Activated CD4-positive, alpha-beta T cell treated with anti-CD3 and anti-CD28 coated beads for 36 hours (primary cell): ENCODE measurements at regions of chr12 and their contacts with region 1.

Region 1: DNA sequence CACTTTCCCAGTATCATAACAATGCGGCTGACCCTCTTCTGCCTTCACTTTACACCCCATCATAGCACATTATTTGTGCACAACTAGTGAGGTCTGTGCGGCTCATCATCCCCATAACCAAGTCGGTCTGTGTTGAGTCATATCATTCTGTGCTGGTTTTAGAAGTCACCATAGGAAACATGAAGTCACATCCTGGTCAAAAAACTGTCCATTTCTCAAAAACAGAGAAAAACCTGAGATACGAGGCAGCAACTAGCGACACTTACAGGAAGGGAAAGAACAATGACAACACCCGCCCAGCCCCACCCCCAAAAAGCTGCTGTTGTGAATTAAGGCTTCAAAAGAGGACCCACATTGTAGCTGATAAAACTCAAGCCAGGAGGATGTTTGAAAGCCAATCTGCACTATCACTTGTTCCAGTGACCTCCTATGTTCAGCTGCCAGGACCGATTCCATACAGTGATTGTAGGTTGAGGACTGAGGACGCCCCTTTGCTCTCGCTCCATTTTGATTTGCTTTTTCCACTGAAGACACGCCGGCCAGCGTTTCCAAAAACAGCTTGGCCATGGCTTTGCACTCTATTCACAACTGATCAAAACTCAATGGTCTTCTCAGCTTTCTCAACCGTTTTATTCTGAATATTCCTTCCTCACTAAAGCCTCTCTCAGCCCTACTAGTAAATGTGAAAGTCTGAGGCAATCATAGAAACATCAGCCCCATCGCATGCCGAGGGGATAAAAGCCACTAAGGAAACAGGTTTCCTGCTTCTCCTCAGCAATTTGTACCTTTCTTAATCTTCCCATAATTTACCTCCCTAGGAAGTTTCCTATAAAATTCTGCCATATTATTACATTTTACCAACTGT is 87.5 kb downstream of the DUSP16 start:
- DNase-seq: peak; percentile 78
- ATAC-seq: peak; percentile 87
- H3K4me3 Mint-ChIP-seq: peak overlapping the region; percentile 59
- H3K27ac Mint-ChIP-seq: peak overlapping the region; percentile 97
- H3K4me1 Mint-ChIP-seq: peaks cover 81% of the 10 kb centered on the region
- H3K27me3 Mint-ChIP-seq: no peaks in the 10 kb centered on the region

Region 2: GRCh38 chr12:12442548-12443071 is 32.6 kb before region 1 on chr12:
- CTCF ChIA-PET with region 1: interaction called, 6 read pairs
- POLR2A ChIA-PET with region 1: interaction called, 15 read pairs
- intact Hi-C with region 1: loop called (anchors 1 kb)
- DNase-seq: no peak
- ATAC-seq: peak; percentile 16
- H3K4me3 Mint-ChIP-seq: peak overlapping the region; percentile 46
- H3K27ac Mint-ChIP-seq: peak overlapping the region; percentile 98
- H3K4me1 Mint-ChIP-seq: peaks cover 81% of the 10 kb centered on the region
- H3K27me3 Mint-ChIP-seq: no peaks in the 10 kb centered on the region

Region 3: DNA sequence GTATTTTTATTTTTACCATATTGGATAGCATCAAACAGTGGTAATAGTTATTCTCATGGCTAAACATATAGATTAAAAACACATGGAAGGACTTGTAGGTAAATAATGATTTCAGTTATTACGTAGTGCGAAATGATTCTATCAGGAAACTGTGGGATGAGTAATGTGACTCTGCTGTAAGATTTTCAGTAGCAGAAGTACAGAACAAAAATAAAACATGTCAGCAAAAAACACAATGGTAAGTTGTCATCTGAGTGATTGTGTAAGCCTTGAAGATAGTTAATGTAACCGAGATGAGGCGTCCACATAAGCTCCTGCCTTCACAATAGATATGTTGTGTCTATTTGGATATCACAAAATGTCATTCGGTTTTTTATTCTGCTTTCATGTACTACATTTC is 18.5 kb before region 1 on chr12:
- CTCF ChIA-PET with region 1: interaction called, 22 read pairs
- POLR2A ChIA-PET with region 1: interaction called, 27 read pairs
- intact Hi-C with region 1: loop called in 1 of 2 experiments (anchors 2 kb)
- DNase-seq: no peak
- ATAC-seq: peak; percentile 57
- H3K4me3 Mint-ChIP-seq: peak overlapping the region; percentile 3
- H3K27ac Mint-ChIP-seq: peak overlapping the region; percentile 88
- H3K4me1 Mint-ChIP-seq: peaks cover 46% of the 10 kb centered on the region
- H3K27me3 Mint-ChIP-seq: no peaks in the 10 kb centered on the region

Region 4: DNA sequence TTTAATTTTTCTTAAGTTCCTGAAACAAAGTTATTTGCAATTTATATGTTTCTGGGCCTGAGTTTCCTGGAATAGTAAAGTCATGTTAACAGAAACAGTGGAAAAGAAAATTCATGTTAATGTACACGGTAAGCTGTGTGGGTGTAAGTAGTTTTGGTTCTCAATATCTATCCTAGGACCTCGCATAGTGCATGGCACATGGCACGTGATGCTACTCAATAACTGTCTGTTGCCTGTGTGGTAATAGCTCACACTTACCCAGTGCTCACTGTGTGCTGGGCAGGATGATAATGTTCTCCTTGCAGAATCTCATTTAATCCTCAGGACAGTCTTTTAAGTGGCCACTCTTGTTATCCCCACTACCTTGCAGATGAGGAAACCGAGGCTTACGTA is 13.2 kb before region 1 on chr12:
- CTCF ChIA-PET with region 1: interaction called, 22 read pairs
- POLR2A ChIA-PET with region 1: interaction called, 27 read pairs
- intact Hi-C with region 1: loop called (anchors 1 kb)
- DNase-seq: peak; percentile 71
- ATAC-seq: peak; percentile 81
- H3K4me3 Mint-ChIP-seq: peak overlapping the region; percentile 35
- H3K27ac Mint-ChIP-seq: peak overlapping the region; percentile 85
- H3K4me1 Mint-ChIP-seq: peaks cover 78% of the 10 kb centered on the region
- H3K27me3 Mint-ChIP-seq: no peaks in the 10 kb centered on the region

Region 5: GRCh38 chr12:12486661-12487240 is 11.6 kb after region 1 on chr12:
- CTCF ChIA-PET with region 1: interaction called, 12 read pairs
- POLR2A ChIA-PET with region 1: interaction called, 13 read pairs
- intact Hi-C with region 1: no loop called
- DNase-seq: no peak
- ATAC-seq: peak; percentile 32
- H3K4me3 Mint-ChIP-seq: no peak overlapping the region
- H3K27ac Mint-ChIP-seq: peak overlapping the region; percentile 80
- H3K4me1 Mint-ChIP-seq: peaks cover 57% of the 10 kb centered on the region
- H3K27me3 Mint-ChIP-seq: no peaks in the 10 kb centered on the region